B cell (primary cell): ENCODE measurements at regions of chr17 and their contacts with region 1.

Region 1: DNA sequence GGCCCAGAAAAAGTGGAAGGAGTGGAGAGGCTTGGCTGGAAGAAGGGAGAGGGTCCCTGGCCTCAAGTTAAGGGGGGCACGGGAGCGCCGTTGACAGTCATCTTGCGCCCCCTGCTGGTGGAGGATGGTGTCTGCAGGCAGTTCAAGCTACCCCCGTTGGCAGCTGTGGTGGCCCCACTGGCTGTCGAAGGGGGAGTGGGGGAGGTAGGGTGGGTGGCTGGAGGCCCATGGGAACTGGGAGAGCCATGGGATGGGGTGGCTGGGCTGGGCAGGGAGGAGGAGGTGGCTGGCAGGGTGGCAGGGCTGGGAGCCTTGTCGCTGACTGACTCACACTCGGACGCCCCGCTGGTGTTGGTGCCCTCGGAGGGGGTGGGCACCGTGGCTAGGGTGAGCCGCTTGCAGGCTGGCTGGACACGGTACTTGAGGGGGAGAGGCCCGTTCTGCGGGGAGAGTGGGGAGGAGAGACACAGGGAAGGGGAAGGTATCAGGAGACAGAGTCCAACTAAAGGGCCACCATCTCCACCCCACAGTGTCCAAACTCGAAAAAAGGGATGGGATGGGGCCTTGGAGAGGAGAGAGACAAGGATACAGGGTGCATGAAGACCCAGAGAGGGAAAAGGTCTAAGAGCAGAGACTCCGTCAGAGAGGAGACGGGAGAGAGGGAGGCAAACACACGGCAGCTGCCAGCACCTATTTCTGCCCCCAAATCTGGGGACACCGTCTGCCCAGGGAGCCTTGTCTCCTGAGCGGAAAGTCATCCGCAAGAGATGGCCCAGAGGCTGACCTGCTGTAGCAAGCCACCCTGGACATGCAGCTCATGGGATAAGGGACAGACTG is 5.2 kb downstream of the CISD3 start:
- DNase-seq: peak; percentile 77
- ATAC-seq: peak; percentile 34
- H3K4me3 ChIP-seq: no peak overlapping the region
- H3K4me3 Mint-ChIP-seq: no peak overlapping the region
- H3K27ac ChIP-seq: no peak overlapping the region
- H3K27ac Mint-ChIP-seq: no peak overlapping the region
- H3K4me1 ChIP-seq: peaks cover 4 to 25% of the 10 kb centered on the region in 2 donors
- H3K4me1 Mint-ChIP-seq: peaks cover 34% of the 10 kb centered on the region
- H3K27me3 ChIP-seq: no peaks in the 10 kb centered on the region
- H3K27me3 Mint-ChIP-seq: peaks cover 6% of the 10 kb centered on the region
- CTCF ChIP-seq: peak; percentile 85

Region 2: GRCh38 chr17:38557836-38558727 is 177.3 kb before region 1 on chr17:
- CTCF ChIA-PET with region 1: interaction called, 42 read pairs
- POLR2A ChIA-PET with region 1: interaction called, 3 read pairs
- intact Hi-C with region 1: no loop called
- DNase-seq: peak; percentile 93
- ATAC-seq: peak; percentile 76
- H3K4me3 ChIP-seq: peak overlapping the region; percentile 40 to 90 (median 66)
- H3K4me3 Mint-ChIP-seq: peak overlapping the region; percentile 99
- H3K27ac ChIP-seq: no peak overlapping the region
- H3K27ac Mint-ChIP-seq: peak overlapping the region; percentile 88
- H3K4me1 ChIP-seq: peaks cover 23 to 38% of the 10 kb centered on the region in 2 donors
- H3K4me1 Mint-ChIP-seq: peaks cover 30% of the 10 kb centered on the region
- H3K27me3 ChIP-seq: peaks cover 0 to 31% (median 20%) of the 10 kb centered on the region in 4 experiments
- H3K27me3 Mint-ChIP-seq: peaks cover 27% of the 10 kb centered on the region
- CTCF ChIP-seq: peak; percentile 92

Region 3: DNA sequence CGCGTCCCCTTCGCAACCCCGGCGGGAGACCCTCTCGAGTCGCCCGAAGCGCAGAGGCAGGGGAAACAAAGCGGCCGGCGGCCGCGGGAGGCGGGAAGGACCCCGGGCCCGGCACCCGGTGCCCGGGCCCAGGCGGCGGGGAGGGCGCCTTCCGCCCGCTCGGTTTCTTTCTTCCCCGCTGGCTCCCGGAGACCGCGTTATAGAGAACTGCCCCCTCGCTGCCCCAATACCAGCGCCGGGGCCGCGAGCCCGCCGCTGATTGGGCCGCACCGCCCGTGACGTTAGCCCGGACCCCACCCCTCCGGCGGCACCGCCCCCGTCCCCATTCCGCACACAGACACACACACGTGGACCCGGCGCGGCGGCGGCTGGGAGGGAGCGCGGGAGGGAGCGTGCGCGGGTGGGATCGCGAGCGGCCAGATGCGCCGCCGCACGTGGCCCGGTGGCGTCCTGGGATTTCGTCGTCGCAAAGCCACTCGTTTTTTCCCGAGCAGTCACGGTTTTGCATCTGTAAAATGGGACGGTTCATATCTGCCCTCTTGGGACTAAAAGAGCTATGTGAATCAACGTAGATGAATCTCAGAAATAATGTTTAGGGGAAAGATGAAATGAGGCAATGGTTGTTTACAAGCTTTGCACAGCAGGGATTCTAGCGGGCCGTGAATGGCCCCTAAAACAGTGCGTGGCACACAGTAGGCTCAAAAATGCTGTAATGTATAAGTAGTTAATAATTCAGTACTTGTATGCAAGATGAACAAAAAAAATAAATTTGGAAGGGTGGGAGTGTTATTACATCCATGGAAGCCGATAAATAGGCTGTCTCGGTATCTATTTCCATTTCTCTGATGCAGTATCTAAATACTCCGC is 60.4 kb before region 1 on chr17 and contains the start of gene EPOP:
- CTCF ChIA-PET with region 1: interaction called, 172 read pairs
- POLR2A ChIA-PET with region 1: interaction called, 10 read pairs
- intact Hi-C with region 1: loop called (anchors 1 kb)
- DNase-seq: peak; percentile 85
- ATAC-seq: peak; percentile 85
- H3K4me3 ChIP-seq: peak within 1 kb of the TSS; percentile 16 to 68 (median 56)
- H3K4me3 Mint-ChIP-seq: peak within 1 kb of the TSS; percentile 87
- H3K27ac ChIP-seq: no peak within 1 kb of the TSS
- H3K27ac Mint-ChIP-seq: peak within 1 kb of the TSS; percentile 63
- H3K4me1 ChIP-seq: peaks cover 27 to 40% of the 10 kb centered on the region in 2 donors
- H3K4me1 Mint-ChIP-seq: peaks cover 29% of the 10 kb centered on the region
- H3K27me3 ChIP-seq: peaks cover 0 to 52% (median 26%) of the 10 kb centered on the region in 4 experiments
- H3K27me3 Mint-ChIP-seq: peaks cover 38% of the 10 kb centered on the region
- CTCF ChIP-seq: no peak
- total RNA-seq, gene EPOP: 0.97 and 1.2 TPM in 2 replicates

Region 4: GRCh38 chr17:38693700-38694329 is 41.6 kb before region 1 on chr17:
- CTCF ChIA-PET with region 1: interaction called, 14 read pairs
- POLR2A ChIA-PET with region 1: no interaction called
- intact Hi-C with region 1: no loop called
- DNase-seq: no peak
- ATAC-seq: no peak
- H3K4me3 ChIP-seq: no peak overlapping the region
- H3K4me3 Mint-ChIP-seq: no peak overlapping the region
- H3K27ac ChIP-seq: no peak overlapping the region
- H3K27ac Mint-ChIP-seq: no peak overlapping the region
- H3K4me1 ChIP-seq: no peaks in the 10 kb centered on the region
- H3K4me1 Mint-ChIP-seq: peaks cover 10% of the 10 kb centered on the region
- H3K27me3 ChIP-seq: no peaks in the 10 kb centered on the region
- H3K27me3 Mint-ChIP-seq: peaks cover 7% of the 10 kb centered on the region
- CTCF ChIP-seq: no peak

Region 5: GRCh38 chr17:38702166-38702899 is 33.0 kb before region 1 on chr17:
- CTCF ChIA-PET with region 1: interaction called, 32 read pairs
- POLR2A ChIA-PET with region 1: interaction called, 3 read pairs
- intact Hi-C with region 1: loop called (anchors 1 kb)
- DNase-seq: peak; percentile 92
- ATAC-seq: peak; percentile 42
- H3K4me3 ChIP-seq: peak overlapping the region; percentile 76 to 95 (median 93)
- H3K4me3 Mint-ChIP-seq: peak overlapping the region; percentile 99
- H3K27ac ChIP-seq: peak overlapping the region; percentile 91 to 97
- H3K27ac Mint-ChIP-seq: peak overlapping the region; percentile 99
- H3K4me1 ChIP-seq: peaks cover 17 to 51% of the 10 kb centered on the region in 2 donors
- H3K4me1 Mint-ChIP-seq: peaks cover 50% of the 10 kb centered on the region
- H3K27me3 ChIP-seq: no peaks in the 10 kb centered on the region
- H3K27me3 Mint-ChIP-seq: no peaks in the 10 kb centered on the region
- CTCF ChIP-seq: no peak

Region 6: DNA sequence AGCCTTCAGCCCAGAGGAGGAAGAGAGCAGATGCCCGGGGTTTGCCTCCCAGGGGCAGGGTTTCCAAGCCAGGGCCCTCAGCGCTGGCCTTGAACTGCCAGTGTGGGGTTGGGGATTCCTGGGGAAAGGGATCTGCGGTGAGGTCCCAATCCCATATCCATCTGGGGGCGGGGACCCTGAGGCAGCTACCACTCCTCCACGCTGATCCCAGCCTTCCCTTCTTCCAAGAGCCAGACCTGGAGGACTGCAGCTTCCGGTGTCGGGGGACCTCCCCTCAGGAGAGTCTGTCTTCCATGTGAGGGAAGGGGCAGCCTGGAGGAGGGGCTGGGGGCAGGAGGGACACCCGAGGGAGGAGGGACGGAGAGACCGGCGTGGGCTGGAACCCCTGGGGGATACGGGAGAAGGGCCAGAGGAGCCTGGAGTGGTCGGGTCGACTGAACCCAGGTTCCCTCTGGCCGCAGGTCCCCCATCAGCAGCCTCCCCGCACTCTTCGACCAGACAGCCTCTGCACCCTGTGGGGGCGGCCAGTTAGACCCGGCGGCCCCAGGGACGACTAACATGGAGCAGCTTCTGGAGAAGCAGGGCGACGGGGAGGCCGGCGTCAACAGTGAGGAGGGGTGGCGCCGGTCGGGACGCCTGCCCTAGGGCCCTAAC is 16.0 kb before region 1 on chr17:
- CTCF ChIA-PET with region 1: interaction called, 11 read pairs
- POLR2A ChIA-PET with region 1: interaction called, 5 read pairs
- intact Hi-C with region 1: no loop called
- DNase-seq: no peak
- ATAC-seq: no peak
- H3K4me3 ChIP-seq: no peak overlapping the region
- H3K4me3 Mint-ChIP-seq: no peak overlapping the region
- H3K27ac ChIP-seq: no peak overlapping the region
- H3K27ac Mint-ChIP-seq: no peak overlapping the region
- H3K4me1 ChIP-seq: peaks cover 0 to 5% of the 10 kb centered on the region in 2 donors
- H3K4me1 Mint-ChIP-seq: peaks cover 14% of the 10 kb centered on the region
- H3K27me3 ChIP-seq: no peaks in the 10 kb centered on the region
- H3K27me3 Mint-ChIP-seq: no peaks in the 10 kb centered on the region
- CTCF ChIP-seq: no peak

Region 7: DNA sequence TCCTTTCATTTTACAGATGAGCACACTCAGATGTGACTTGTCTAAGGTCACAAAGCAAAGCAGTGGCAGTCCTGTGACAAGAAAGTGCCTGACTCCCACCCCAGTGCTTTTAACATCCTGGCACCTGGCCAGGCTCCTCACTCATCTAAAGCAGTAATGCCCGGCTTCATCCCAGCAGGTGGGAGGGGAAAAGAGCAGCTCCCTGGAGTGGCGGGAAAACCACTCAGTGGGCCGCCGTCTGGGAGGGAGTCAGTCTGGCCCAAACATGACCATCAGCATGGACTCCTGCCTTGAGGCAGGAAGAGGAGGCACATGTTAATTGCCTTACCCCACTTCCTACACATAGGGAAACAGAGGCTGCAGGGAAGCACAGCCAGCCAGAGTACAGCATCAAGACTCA is 10.2 kb after region 1 on chr17:
- CTCF ChIA-PET with region 1: interaction called, 20 read pairs
- POLR2A ChIA-PET with region 1: interaction called, 7 read pairs
- intact Hi-C with region 1: no loop called
- DNase-seq: no peak
- ATAC-seq: no peak
- H3K4me3 ChIP-seq: no peak overlapping the region
- H3K4me3 Mint-ChIP-seq: no peak overlapping the region
- H3K27ac ChIP-seq: no peak overlapping the region
- H3K27ac Mint-ChIP-seq: no peak overlapping the region
- H3K4me1 ChIP-seq: peaks cover 49 to 51% of the 10 kb centered on the region in 2 donors
- H3K4me1 Mint-ChIP-seq: peaks cover 33% of the 10 kb centered on the region
- H3K27me3 ChIP-seq: peaks cover 0 to 49% (median 19%) of the 10 kb centered on the region in 4 experiments
- H3K27me3 Mint-ChIP-seq: peaks cover 25% of the 10 kb centered on the region
- CTCF ChIP-seq: no peak

Region 8: GRCh38 chr17:38815576-38816193 is 80.3 kb after region 1 on chr17:
- CTCF ChIA-PET with region 1: no interaction called
- POLR2A ChIA-PET with region 1: no interaction called
- intact Hi-C with region 1: no loop called
- DNase-seq: no peak
- ATAC-seq: no peak
- H3K4me3 ChIP-seq: no peak overlapping the region
- H3K4me3 Mint-ChIP-seq: no peak overlapping the region
- H3K27ac ChIP-seq: no peak overlapping the region
- H3K27ac Mint-ChIP-seq: no peak overlapping the region
- H3K4me1 ChIP-seq: no peaks in the 10 kb centered on the region
- H3K4me1 Mint-ChIP-seq: peaks cover 3% of the 10 kb centered on the region
- H3K27me3 ChIP-seq: no peaks in the 10 kb centered on the region
- H3K27me3 Mint-ChIP-seq: no peaks in the 10 kb centered on the region
- CTCF ChIP-seq: peak; percentile 25